ENCODE measurements at regions of chr12 and their contacts with region 1.

Region 1: DNA sequence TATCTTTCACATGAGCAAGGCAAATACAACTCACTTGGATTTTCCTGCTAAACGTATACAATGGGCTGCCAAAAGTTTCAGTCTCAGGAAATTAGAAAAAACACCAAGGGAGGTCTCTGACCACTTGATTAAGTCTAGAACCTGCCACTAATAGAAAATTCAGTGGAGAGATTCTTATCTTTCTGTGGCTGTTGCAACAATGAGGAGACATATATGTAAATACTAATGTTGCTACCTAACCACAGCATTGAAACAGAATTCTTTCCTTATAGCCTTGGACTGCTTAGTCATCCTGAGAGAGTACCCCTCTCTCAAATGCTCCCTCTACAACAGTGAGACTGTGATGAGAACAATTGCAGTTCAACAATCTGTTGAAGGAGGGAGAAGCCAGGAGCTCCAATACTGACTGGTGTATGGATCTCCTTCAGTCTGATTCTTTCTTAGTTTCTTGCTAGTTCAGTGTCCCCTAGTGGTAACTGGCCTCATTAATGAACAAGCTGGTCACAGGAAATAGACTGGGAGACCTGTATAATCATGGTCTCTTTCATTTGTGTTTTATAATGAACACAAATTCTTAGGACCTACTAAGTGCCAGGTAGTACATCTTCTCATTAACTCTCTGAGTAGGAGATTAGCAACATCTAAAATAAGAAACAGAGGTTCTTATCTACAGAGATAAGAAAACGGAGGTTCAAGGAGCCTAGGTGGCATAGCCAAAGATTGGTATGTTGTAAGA is 164.5 kb downstream of the SLC38A4 start:
- DNase-seq: peak in 1 of 2 donors; percentile 60
- ATAC-seq: peak; percentile 81 to 88 (median 84)
- H3K4me3 ChIP-seq: no peak overlapping the region
- H3K27ac ChIP-seq: peak overlapping the region in 8 of 10 donors; percentile 34 to 73 (median 65)
- H3K4me1 ChIP-seq: peaks cover 4 to 62% (median 43%) of the 10 kb centered on the region in 9 donors
- H3K27me3 ChIP-seq: no peaks in the 10 kb centered on the region
- CTCF ChIP-seq: peak; percentile 50 to 91 (median 84)

Region 2: DNA sequence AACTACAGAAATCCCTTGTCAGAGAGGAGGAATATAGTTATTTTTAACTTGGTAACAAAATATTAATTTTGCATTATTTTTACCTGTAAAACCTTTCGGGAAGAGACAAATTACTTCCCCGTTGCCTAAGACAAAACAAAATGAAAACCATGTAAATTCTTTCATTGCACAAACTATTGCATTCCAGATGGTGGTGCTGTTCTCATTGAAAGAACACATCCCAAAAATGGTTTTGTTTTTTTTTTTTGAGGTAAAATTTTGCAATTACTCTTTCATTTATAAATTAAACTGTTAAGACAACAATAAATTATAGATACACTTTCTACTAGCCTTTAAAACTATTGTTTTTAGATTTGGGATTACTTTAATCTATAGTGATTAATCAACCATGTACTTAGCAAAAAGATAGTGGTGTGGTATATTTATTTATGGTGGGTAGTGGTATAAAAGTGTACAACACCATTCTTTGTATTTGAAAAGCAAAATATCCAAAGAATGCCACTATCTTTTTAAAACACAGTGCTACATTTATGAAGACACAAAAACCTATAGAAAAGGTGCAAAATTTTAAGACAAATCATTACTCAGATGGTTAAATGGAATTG is 507.9 kb before region 1 on chr12:
- intact Hi-C with region 1: loop called in 1 of 10 experiments (anchors 10 kb)
- DNase-seq: no peak
- ATAC-seq: no peak
- H3K4me3 ChIP-seq: no peak overlapping the region
- H3K27ac ChIP-seq: no peak overlapping the region
- H3K4me1 ChIP-seq: peaks cover 0 to 12% (median 0%) of the 10 kb centered on the region in 9 donors
- H3K27me3 ChIP-seq: no peaks in the 10 kb centered on the region
- CTCF ChIP-seq: peak; percentile 10 to 71 (median 61)

Region 3: DNA sequence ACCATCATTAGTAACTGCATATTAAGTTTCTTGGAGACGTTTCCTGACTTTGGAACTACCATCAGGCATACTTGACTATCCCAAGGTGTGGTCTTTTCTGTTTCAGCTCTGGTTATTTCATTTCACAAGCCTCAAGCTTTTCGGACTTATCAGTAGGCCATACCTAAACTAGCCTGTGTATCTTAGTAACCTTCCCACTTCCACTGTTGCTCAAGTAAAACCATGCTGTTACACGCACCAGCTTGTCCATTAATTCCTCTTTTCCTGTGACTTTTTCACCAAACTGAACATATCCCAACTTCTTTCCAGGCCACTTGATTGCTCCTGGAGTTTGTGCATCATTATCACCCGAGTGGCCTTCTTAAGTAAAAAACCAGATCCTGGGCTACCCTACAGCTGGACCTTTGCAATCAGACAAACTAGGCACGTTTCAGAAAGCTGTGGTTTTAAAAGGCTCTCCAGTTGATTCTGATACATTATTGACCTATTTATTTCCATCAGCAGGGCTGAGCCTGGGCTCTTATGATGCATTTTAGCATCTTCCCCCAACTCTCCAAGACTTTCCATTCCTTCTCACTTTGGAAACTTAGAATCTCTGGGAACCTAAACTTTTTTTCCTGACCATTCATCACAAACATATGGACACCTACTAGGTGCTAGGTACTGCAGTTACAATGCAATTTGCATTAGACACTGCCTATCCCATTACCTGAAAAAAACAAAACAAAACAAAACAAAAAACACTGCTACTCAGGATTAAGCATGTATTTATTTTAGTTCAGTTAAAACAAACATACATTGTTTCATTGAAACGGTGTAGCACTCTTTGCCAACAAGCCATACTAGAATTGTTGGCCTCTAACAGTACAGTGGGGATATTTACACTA is 303.6 kb before region 1 on chr12:
- intact Hi-C with region 1: loop called in 1 of 10 experiments (anchors 10 kb)
- DNase-seq: no peak
- ATAC-seq: peak in 6 of 8 donors; percentile 17 to 49 (median 30)
- H3K4me3 ChIP-seq: no peak overlapping the region
- H3K27ac ChIP-seq: no peak overlapping the region
- H3K4me1 ChIP-seq: peaks cover 0 to 36% (median 3%) of the 10 kb centered on the region in 9 donors
- H3K27me3 ChIP-seq: no peaks in the 10 kb centered on the region
- CTCF ChIP-seq: no peak

Region 4: DNA sequence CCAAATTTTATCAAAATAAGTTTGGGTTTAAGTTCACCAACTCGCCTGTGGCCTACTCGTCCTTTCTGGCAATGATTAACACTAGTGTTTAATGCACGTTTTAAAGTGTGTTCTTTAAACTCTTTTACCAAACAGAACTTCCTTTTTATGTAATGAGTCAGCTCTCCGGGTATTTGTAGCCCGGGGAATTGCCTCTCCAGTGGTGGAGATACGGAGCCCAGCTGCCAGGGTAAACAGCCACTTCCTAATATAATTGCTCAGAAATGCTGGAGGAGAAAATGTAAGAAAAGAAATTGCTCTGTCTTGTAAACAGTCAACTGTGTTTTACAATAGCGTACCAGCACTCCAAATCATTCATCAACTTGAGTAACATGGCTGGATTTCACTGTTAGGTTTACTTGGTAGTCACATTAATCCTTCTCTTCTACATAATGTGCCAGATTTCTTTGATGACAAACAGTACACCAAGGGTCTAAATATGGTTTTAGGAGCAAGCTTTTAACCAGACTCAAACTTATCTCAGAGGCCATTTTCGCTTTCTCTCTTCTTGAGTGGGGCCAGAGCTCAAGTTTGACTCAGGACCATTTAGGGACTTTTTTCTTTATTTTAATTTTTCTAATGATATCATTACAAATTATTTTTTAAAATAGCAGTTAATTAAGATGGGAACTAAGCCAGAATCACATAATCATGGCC is 187.5 kb before region 1 on chr12:
- intact Hi-C with region 1: loop called in 3 of 10 experiments (anchors 1 to 5 kb)
- DNase-seq: peak; percentile 41 to 74
- ATAC-seq: peak; percentile 74 to 95 (median 92)
- H3K4me3 ChIP-seq: peak overlapping the region in 1 of 10 donors; percentile 3
- H3K27ac ChIP-seq: peak overlapping the region; percentile 37 to 91 (median 86)
- H3K4me1 ChIP-seq: peaks cover 7 to 46% (median 29%) of the 10 kb centered on the region in 9 donors
- H3K27me3 ChIP-seq: no peaks in the 10 kb centered on the region
- CTCF ChIP-seq: no peak

Region 5: DNA sequence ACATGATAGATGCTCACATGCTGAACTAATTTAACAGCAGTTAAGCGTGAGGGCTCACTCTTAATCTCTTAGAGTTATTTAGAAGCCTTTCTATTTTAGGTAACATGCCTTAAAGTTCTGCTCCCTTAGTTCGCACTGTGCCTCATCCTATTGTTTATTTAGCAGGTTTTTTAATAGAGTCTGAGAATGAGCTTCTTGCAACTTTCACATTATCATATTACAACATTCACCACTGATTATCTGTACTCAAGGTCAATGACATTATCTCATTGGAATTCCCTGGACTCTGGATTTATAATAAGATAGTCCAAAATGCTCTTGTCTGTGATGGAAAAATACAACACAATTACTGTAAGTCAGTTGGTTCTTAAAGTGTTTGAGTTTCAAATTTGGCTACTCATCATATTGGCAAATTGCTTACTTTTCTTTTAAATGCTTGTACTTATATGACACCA is 105.1 kb before region 1 on chr12:
- intact Hi-C with region 1: loop called in 2 of 10 experiments (anchors 5 to 10 kb)
- DNase-seq: no peak
- ATAC-seq: peak; percentile 79 to 95 (median 88)
- H3K4me3 ChIP-seq: no peak overlapping the region
- H3K27ac ChIP-seq: peak overlapping the region; percentile 25 to 77 (median 68)
- H3K4me1 ChIP-seq: peaks cover 0 to 53% (median 21%) of the 10 kb centered on the region in 9 donors
- H3K27me3 ChIP-seq: no peaks in the 10 kb centered on the region
- CTCF ChIP-seq: no peak